Activated CD8-positive, alpha-beta T cell treated with anti-CD3 and anti-CD28 coated beads for 36 hours (primary cell): ENCODE measurements at regions of chr5 and their contacts with region 1.

Region 1: GRCh38 chr5:54867310-54867944 is 118.0 kb downstream of the ESM1 start:
- DNase-seq: no peak
- ATAC-seq: peak; percentile 17
- H3K4me3 Mint-ChIP-seq: no peak overlapping the region
- H3K27ac Mint-ChIP-seq: no peak overlapping the region
- H3K4me1 Mint-ChIP-seq: peaks cover 27% of the 10 kb centered on the region
- H3K27me3 Mint-ChIP-seq: peaks cover 24% of the 10 kb centered on the region
- CTCF ChIP-seq: peak; percentile 71

Region 2: DNA sequence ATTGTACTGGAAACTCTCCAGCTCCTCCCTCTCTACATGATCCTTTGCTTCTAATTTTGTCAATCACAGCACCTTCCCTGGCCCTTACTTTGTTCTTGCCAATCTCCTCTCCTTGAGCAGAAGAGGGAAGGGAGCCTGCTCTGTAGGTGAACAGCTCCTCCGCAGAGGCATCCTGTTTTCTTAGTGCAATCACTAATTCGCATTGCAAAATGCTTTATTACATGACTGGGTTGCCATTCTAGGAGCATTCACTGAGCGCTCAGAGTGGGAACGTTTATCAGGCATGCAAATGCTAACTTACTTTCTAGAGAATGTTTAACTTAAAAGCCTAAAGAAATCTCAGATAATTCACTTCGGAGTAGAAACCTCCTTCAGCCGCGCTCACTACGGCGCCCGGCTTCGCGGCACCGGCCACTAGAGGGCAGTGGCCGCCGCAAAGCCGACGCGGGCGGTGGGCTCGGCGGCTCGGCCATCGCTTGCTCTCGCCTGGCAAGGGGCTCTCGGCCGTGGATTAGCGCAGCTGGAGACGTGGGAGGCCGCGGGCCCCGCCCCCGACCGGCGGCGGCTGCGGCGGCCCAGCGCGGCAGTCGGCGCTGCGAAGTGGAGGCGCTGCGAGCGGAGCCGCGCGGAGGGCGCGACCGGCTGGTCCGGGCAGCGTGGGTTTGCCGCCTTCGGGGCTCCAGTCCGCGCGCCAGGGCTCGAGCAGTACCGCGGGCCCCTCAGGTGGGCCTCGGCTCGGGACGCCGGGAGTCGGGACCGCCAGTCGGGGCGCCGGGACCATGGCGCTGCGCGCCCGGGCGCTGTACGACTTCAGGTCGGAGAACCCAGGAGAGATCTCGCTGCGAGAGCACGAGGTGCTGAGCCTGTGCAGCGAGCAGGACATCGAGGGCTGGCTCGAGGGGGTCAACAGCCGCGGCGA is 350.0 kb before region 1 on chr5 and contains the start of gene SNX18:
- CTCF ChIA-PET with region 1: interaction called, 75 read pairs
- POLR2A ChIA-PET with region 1: interaction called, 4 read pairs
- intact Hi-C with region 1: loop called (anchors 5 kb)
- DNase-seq: peak; percentile 90
- ATAC-seq: peak; percentile 83
- H3K4me3 Mint-ChIP-seq: peak within 1 kb of the TSS; percentile 75
- H3K27ac Mint-ChIP-seq: no peak within 1 kb of the TSS
- H3K4me1 Mint-ChIP-seq: peaks cover 38% of the 10 kb centered on the region
- H3K27me3 Mint-ChIP-seq: peaks cover 3% of the 10 kb centered on the region
- CTCF ChIP-seq: peak; percentile 91
- total RNA-seq, gene SNX18: 5.9 to 6.8 TPM

Region 3: DNA sequence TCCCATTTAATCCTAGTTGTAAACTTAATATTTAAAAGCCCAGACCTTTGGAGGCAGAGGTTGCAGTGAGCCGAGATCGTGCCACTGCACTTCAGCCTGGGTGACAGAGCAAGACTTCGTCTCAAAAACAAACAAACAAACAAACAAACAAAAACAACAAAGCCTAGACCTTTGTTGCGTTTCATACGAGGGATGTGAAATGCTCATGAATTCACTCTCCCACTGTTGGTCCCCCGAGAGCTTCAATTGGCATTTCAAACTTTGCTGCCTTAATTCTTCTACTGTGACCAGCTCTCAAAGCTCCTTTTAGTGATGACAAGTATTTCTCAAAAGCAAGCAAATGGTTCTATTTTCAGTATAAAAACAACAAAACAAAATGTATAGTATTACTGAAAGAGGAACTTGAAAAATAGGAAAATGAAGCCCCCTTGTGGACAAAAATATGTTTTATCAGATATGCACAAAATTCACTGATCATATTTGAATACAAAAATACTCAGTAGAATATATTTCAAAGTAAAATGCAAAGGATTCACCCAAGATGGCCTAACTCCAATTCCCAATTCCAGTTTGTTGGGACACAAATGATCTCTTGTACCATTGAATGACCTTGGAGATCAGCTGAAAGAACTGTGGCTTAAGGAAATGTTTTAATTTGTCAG is 22.4 kb before region 1 on chr5:
- CTCF ChIA-PET with region 1: interaction called, 26 read pairs
- POLR2A ChIA-PET with region 1: no interaction called
- intact Hi-C with region 1: no loop called
- DNase-seq: no peak
- ATAC-seq: no peak
- H3K4me3 Mint-ChIP-seq: no peak overlapping the region
- H3K27ac Mint-ChIP-seq: no peak overlapping the region
- H3K4me1 Mint-ChIP-seq: peaks cover 6% of the 10 kb centered on the region
- H3K27me3 Mint-ChIP-seq: peaks cover 8% of the 10 kb centered on the region
- CTCF ChIP-seq: peak; percentile 73

Region 4: GRCh38 chr5:54886866-54887265 is 19.4 kb after region 1 on chr5:
- CTCF ChIA-PET with region 1: interaction called, 23 read pairs
- POLR2A ChIA-PET with region 1: interaction called, 3 read pairs
- intact Hi-C with region 1: no loop called
- DNase-seq: no peak
- ATAC-seq: no peak
- H3K4me3 Mint-ChIP-seq: no peak overlapping the region
- H3K27ac Mint-ChIP-seq: no peak overlapping the region
- H3K4me1 Mint-ChIP-seq: peaks cover 6% of the 10 kb centered on the region
- H3K27me3 Mint-ChIP-seq: peaks cover 61% of the 10 kb centered on the region
- CTCF ChIP-seq: no peak

Region 5: GRCh38 chr5:54905943-54906537 is 38.6 kb after region 1 on chr5:
- CTCF ChIA-PET with region 1: interaction called, 16 read pairs
- POLR2A ChIA-PET with region 1: no interaction called
- intact Hi-C with region 1: loop called (anchors 5 kb)
- DNase-seq: peak; percentile 90
- ATAC-seq: no peak
- H3K4me3 Mint-ChIP-seq: no peak overlapping the region
- H3K27ac Mint-ChIP-seq: no peak overlapping the region
- H3K4me1 Mint-ChIP-seq: peaks cover 17% of the 10 kb centered on the region
- H3K27me3 Mint-ChIP-seq: peaks cover 36% of the 10 kb centered on the region
- CTCF ChIP-seq: peak; percentile 88